Head of caudate nucleus (tissue), 42 donors: ENCODE measurements at regions of chr9 and their contacts with region 1.

Region 1: GRCh38 chr9:83937911-83938323 is 16.7 kb upstream of the KIF27 start:
- DNase-seq: peak in 23 of 42 donors; percentile 3 to 73 (median 40)

Region 2: GRCh38 chr9:84261082-84261746 is 323.3 kb after region 1 on chr9:
- intact Hi-C with region 1: loop called (anchors 5 kb)
- DNase-seq: peak; percentile 74 to 93 (median 84)

Region 3: GRCh38 chr9:84315278-84315877 is 377.5 kb after region 1 on chr9:
- intact Hi-C with region 1: loop called (anchors 5 kb)
- DNase-seq: peak; percentile 11 to 87 (median 68)